ENCODE measurements at regions of chr17 and their contacts with region 1.

Region 1: DNA sequence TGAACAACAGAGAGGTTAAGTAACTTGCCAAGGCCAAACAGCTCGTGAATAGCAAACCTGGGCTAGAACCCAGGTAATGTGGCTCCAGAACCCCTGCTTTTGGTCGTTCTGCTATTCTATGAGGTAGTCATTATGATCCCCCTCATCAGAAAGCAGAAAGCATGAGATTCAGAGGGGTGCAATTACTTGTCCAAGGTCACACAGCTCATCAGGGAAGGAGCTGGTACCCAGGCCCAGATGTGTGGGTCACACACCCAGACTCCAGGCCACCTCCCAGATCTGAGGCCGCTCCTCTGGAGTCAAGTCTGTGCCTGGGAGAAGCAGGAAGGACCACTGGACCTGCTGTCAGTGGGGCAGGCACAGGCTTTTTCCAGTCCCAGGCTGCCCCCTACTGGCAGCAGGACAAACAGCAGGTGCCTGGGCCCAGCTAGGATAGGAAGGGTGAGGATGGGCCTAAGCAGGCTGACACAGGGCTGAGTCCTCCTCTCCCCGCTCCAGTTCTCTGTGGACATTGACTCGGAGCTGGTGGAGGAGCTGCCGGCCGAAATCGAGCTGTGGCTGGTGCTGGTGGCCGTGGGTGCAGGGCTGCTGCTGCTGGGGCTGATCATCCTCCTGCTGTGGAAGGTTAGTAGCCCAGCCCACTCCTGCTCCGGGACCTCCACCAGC is 7.8 kb upstream of the PDK2 start:
- DNase-seq: peak; percentile 79
- H3K4me3 ChIP-seq: no peak overlapping the region
- H3K27ac ChIP-seq: no peak overlapping the region
- H3K4me1 ChIP-seq: no peaks in the 10 kb centered on the region
- H3K27me3 ChIP-seq: no peaks in the 10 kb centered on the region

Region 2: DNA sequence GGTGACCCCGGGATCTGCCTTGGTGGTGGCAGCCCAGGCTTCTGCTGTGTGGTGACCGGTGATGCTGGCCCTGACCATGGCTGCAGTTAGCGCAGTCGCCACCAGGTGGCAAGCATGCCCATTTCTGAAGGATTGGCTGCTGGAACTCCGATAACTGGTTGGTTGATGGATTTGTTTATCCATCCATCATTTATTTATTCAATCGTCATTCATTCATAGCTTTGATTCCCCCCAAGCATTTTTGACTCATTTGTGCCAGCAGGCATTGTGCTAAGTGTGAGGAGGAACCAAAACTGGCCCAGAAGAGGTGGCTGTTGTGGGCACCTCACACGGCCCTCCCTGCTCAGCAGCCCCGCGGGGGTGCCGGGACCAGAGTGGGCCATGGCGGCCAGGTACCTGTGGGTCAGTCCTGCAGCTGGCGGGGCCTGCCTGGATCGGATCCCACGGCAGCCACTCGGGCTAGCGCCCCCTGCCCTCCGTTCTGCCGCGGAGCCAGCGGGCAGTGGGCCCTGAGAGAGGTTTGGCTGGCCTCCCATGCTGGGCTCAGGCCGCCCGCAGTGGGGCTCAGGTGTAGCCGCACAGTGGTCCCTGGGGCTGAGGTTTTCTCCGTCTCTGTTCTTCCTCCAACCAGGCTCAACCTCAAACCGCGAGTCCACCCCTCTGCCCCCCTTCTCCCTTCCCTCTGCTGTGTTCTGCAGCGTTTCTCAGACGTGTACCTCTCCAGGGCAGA is 60.3 kb before region 1 on chr17:
- in situ Hi-C with region 1: loop called (anchors 10 kb)
- DNase-seq: peak; percentile 81
- H3K4me3 ChIP-seq: peak overlapping the region; percentile 69
- H3K27ac ChIP-seq: peak overlapping the region; percentile 77
- H3K4me1 ChIP-seq: peaks cover 24% of the 10 kb centered on the region
- H3K27me3 ChIP-seq: no peaks in the 10 kb centered on the region